Activated T-helper 1 cell treated with anti-CD3 and anti-CD28 coated beads, Interleukin-12 subunit alpha, Interleukin-12 subunit beta, Interleukin-2, Interleukin-4 antibody, amounts not matched to agents 30 ng/mL and 10 ng/mL and 1 ng/mL, durations not matched to agents 14 hours and 24 hours and 36 hours (primary cell): ENCODE measurements at regions of chr1 and their contacts with region 1.

Region 1: DNA sequence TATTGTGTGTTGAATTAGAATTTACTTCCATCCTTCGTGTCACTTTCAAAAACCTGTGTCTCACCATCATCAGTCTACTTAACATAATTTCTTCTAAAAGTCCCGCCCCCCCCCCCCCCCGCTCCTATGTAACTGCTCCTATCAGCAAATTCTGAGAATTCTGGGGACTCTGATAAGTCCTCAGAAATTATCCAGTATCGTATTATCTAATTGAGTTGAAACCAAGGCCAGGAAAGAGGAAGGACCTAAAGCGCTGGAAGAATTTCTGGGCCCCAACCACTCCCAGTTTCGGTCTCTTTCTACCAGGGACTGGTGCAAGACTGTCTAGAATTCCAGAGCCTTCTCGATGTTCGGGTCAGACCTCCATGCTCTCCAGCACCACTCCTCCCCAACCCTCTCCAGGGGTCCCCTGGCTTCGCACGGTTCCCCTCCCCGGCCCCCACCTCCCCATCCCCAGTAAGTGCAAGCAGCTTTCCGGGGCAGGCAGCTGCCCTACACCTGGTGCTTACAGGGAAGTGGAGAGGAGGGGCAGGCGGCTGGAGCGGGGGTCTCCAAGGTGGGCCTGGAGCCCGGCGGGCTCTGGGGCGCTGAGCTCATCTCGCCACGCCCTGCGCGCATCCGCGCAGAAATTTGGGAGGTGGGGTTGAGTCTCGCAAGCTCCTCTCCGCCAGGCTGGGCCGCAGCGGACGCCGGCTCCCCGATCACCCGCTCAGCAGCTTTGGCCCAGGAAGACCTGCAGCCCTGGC is 16.0 kb upstream of the ZNF496 start:
- DNase-seq: no peak
- H3K4me3 Mint-ChIP-seq: no peak overlapping the region
- H3K27ac Mint-ChIP-seq: no peak overlapping the region
- H3K4me1 Mint-ChIP-seq: no peaks in the 10 kb centered on the region
- H3K27me3 Mint-ChIP-seq: peaks cover 10% of the 10 kb centered on the region

Region 2: DNA sequence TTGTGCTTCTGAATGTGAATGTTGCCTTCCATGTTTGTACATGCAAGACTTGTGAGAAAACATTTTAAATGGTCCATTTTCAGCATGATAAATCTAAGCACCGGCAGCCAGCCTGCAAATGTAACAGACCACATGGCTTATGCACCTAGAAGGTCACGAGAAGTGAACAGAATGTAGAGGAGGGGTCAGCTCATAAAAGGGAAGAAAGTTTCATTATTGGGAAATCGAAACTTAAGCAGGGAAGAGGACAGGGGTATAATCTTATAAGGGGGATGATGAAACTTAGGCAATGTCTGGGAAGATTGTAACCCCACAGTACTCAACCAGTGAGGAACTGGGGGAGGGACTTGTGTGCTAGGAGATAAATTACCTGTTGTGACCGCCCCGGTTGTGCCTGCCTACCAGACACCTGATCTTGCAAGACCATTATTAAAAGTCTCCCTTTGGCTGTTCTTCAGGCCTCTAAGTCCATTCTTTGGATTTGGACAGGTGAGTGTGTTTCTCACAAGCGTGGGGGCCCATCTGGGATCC is 129.5 kb before region 1 on chr1:
- intact Hi-C with region 1: no loop called
- DNase-seq: no peak
- H3K4me3 Mint-ChIP-seq: no peak overlapping the region
- H3K27ac Mint-ChIP-seq: no peak overlapping the region
- H3K4me1 Mint-ChIP-seq: no peaks in the 10 kb centered on the region
- H3K27me3 Mint-ChIP-seq: no peaks in the 10 kb centered on the region

Region 3: DNA sequence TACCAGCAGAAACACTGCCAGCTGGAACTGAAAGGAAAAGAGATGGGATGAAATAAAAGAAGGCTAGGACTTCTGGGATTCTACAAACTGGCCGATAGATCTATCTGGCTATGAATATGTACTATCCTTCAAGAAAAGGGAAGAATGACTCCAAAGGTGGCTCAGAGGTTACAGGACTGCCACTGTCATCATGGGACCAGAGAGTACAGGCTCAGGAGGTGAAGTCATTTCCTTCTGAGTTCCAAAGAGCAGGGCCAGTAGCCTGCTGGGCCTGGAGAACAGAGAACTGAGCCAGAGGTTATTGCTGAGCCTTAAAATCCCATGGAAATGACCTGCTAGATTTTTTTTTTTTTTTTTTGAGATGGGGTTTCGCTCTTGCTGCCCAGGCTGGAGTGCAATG is 43.6 kb before region 1 on chr1:
- intact Hi-C with region 1: loop called (anchors 1 kb)
- DNase-seq: no peak
- H3K4me3 Mint-ChIP-seq: no peak overlapping the region
- H3K27ac Mint-ChIP-seq: no peak overlapping the region
- H3K4me1 Mint-ChIP-seq: no peaks in the 10 kb centered on the region
- H3K27me3 Mint-ChIP-seq: no peaks in the 10 kb centered on the region

Region 4: DNA sequence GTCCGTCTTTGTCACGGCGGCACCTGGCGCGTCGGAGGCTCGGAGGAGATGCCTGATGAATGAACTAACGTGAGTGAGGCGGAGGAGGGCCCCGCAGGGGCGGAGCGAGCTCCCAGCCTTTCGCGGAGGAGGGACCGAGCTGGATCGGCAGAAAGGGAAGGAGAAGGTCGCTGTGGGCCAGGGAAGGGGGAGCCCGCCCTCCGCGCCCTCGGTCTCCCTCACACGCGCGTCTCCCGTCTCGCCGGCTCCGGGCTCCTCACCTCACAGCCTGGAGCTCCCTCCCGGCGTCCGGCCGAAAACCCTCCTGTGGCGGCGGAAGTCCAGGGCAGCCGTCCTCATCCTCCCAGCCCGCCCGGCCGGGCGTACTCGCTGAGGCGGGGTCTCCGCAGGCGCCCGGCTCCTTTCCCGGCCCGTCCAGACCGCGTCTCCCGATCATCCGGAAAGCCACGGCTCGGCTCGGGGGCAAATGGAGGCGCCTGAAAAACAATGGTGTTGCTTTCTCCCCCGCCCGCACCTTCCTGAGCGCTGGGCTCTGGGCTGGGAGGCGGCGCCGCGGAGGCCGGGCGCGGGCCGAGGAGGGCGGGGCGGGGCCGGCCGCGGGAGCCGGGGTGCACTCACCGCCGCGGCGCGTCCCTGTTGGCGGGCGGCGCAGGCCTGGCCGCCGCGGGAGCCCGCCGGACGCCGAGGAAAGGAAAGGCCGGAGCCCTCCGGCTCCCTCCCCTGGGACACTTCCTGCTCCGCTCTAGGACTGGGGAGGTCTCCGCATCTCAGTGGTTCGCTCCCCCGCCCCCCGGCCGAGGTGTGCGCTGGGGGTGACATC is 16.3 kb before region 1 on chr1 and contains the start of gene ZNF496:
- intact Hi-C with region 1: no loop called
- DNase-seq: peak; percentile 65
- H3K4me3 Mint-ChIP-seq: peak within 1 kb of the TSS; percentile 92
- H3K27ac Mint-ChIP-seq: peak within 1 kb of the TSS; percentile 90
- H3K4me1 Mint-ChIP-seq: peaks cover 21% of the 10 kb centered on the region
- H3K27me3 Mint-ChIP-seq: no peaks in the 10 kb centered on the region
- total RNA-seq, gene ZNF496: 13.8 and 14.8 TPM in 2 replicates